ENCODE measurements at regions of chr19 and their contacts with region 1.

Region 1: GRCh38 chr19:37370880-37371661 is at the start of gene ZNF527:
- DNase-seq: peak; percentile 95 to 97
- ATAC-seq: peak; percentile 98 to 99
- H3K4me3 ChIP-seq: peak within 1 kb of the TSS; percentile 73 to 90 (median 88)
- H3K27ac ChIP-seq: peak within 1 kb of the TSS; percentile 84 to 91 (median 88)
- H3K4me1 ChIP-seq: peaks cover 7 to 8% of the 10 kb centered on the region in 2 donors
- H3K27me3 ChIP-seq: no peaks in the 10 kb centered on the region
- CTCF ChIP-seq: no peak
- POLR2A ChIP-seq: peak; percentile 76 to 88
- total RNA-seq, gene ZNF527: 2.0 to 6.0 (median 2.8) TPM

Region 2: DNA sequence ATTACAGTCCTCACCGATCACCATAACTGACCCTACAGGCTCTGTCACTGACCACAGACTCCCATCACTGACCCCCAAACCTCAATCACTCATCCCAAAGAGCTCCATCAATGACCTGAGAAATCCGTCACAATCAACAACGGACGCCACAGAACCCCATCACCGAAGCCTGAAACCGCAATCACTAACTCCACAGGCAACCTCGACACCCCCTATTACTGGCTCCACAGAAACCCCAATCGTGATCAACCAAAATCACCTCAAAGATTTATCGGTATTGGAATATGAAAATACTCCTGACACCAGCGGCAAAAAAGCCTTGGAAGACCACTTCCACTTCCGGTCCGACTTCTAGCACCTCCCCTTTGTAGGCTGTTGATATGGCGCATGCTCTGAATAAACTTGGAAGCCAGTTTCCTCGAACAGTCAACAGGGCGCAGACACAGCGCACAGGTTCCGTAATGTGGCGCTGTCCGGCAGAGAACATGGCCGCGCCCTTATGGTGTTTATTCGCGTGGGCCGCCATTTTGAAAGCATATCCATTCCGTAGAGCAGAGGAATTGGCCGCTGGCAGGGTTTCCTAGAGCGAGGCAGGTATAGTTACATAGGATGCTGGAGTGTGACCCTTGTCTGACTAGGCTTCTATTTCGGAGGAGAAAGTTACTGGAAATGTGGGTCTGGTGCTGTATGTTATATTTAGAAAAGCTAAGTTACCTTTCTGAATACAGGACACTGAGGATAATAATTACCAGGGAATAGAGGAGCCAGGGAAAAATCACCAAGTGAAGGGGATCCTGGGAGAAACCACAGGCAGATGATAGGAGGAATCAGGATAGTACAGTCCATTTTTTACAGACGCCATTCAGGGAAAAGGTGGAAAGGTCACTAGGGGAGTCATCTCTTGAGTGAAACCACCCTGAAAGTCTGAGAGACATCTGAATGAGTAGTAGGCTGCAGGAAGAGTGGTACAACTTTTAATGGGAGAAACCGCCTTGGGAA is 198.4 kb before region 1 on chr19 and contains the start of gene ZNF585A:
- in situ Hi-C with region 1: loop called in 1 of 4 experiments (anchors 25 kb)
- intact Hi-C with region 1: loop called (anchors 2 kb)
- DNase-seq: peak; percentile 90 to 93
- ATAC-seq: peak; percentile 100
- H3K4me3 ChIP-seq: peak within 1 kb of the TSS; percentile 74 to 85 (median 80)
- H3K27ac ChIP-seq: peak within 1 kb of the TSS; percentile 80 to 90 (median 84)
- H3K4me1 ChIP-seq: peaks cover 7 to 12% of the 10 kb centered on the region in 2 donors
- H3K27me3 ChIP-seq: no peaks in the 10 kb centered on the region
- CTCF ChIP-seq: peak in 2 of 5 experiments; percentile 21 to 32
- POLR2A ChIP-seq: peak in 1 of 2 donors; percentile 14
- total RNA-seq, gene ZNF585A: 2.0 to 10.5 (median 6.0) TPM

Region 3: GRCh38 chr19:37334179-37335071 is 36.6 kb before region 1 on chr19:
- in situ Hi-C with region 1: loop called in 1 of 4 experiments (anchors 5 kb)
- intact Hi-C with region 1: loop called (anchors 1 kb)
- DNase-seq: peak; percentile 87 to 91
- ATAC-seq: peak; percentile 99 to 100
- H3K4me3 ChIP-seq: peak overlapping the region; percentile 66 to 93 (median 82)
- H3K27ac ChIP-seq: peak overlapping the region; percentile 83 to 91 (median 88)
- H3K4me1 ChIP-seq: peaks cover 16 to 25% of the 10 kb centered on the region in 2 donors
- H3K27me3 ChIP-seq: no peaks in the 10 kb centered on the region
- CTCF ChIP-seq: no peak
- POLR2A ChIP-seq: peak; percentile 29 to 61

Region 4: GRCh38 chr19:37655689-37656371 is 284.8 kb after region 1 on chr19:
- in situ Hi-C with region 1: no loop called
- intact Hi-C with region 1: loop called (anchors 10 kb)
- DNase-seq: peak; percentile 63 to 81
- ATAC-seq: peak; percentile 85 to 93
- H3K4me3 ChIP-seq: peak overlapping the region; percentile 75 to 94 (median 84)
- H3K27ac ChIP-seq: peak overlapping the region; percentile 90 to 94 (median 93)
- H3K4me1 ChIP-seq: peaks cover 21 to 22% of the 10 kb centered on the region in 2 donors
- H3K27me3 ChIP-seq: no peaks in the 10 kb centered on the region
- CTCF ChIP-seq: peak in 1 of 5 experiments; percentile 31
- POLR2A ChIP-seq: peak; percentile 29 to 32

Region 5: GRCh38 chr19:37906869-37907734 is 536.0 kb after region 1 on chr19 and contains the start of gene SIPA1L3:
- in situ Hi-C with region 1: no loop called
- intact Hi-C with region 1: loop called (anchors 10 kb)
- DNase-seq: peak; percentile 89 to 90
- ATAC-seq: peak; percentile 97
- H3K4me3 ChIP-seq: peak within 1 kb of the TSS; percentile 84 to 98 (median 90)
- H3K27ac ChIP-seq: peak within 1 kb of the TSS; percentile 62 to 85 (median 83)
- H3K4me1 ChIP-seq: peaks cover 9 to 16% of the 10 kb centered on the region in 2 donors
- H3K27me3 ChIP-seq: no peaks in the 10 kb centered on the region
- CTCF ChIP-seq: peak in 1 of 5 experiments; percentile 3
- POLR2A ChIP-seq: peak; percentile 69 to 87
- total RNA-seq, gene SIPA1L3: 4.1 to 18.7 (median 6.1) TPM

Measured in gastrocnemius medialis (tissue), 4 donors.